Naive thymus-derived CD4-positive, alpha-beta T cell (primary cell): ENCODE measurements at regions of chr9 and their contacts with region 1.

Region 1: DNA sequence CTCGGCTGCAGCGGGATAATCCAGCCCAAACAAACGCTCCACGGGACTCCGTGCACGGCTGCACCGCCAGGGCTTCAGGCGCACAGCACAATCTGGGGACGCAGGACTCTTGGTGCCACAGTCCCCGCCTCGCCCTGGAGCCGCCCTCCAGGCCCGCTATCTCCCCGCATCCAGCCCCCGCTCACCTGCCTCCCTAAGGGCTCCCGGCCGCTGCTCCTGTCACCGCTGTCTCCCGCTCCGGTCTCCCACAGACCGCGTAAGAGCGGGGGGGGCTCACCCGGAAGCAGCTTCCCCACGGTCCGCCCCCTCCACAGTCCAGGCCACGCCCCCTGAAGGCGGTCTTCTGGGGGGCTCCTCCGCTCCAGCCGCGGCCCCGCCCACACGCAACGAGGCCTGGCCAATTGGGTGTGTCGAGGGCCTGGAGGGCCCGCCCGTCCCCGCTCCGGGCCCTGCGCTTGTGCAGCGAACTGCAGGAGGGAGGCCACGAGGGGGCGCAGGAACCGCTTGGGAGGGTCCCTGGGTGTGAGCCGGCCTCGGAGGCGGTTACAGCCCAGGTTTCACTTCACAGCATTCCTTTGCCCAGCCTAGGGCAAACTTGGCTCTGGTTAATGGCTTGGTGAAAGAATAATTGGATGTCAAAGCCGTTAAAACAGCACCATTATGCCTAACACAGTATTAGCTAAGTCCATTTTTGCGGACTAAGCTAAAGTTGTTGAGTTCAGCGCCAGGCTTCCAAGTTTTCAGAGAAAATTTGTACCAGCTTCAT is at the start of gene ALAD:
- DNase-seq: peak; percentile 99 to 100 (median 99)
- ATAC-seq: peak; percentile 99
- H3K4me3 ChIP-seq: peak within 1 kb of the TSS; percentile 82
- H3K4me3 Mint-ChIP-seq: peak within 1 kb of the TSS; percentile 89 to 96 (median 95)
- H3K27ac ChIP-seq: peak within 1 kb of the TSS; percentile 74
- H3K27ac Mint-ChIP-seq: peak within 1 kb of the TSS; percentile 81 to 91 (median 87)
- H3K4me1 ChIP-seq: peaks cover 12 to 13% of the 10 kb centered on the region in 2 donors
- H3K4me1 Mint-ChIP-seq: peaks cover 18 to 37% (median 25%) of the 10 kb centered on the region in 7 donors
- H3K27me3 ChIP-seq: no peaks in the 10 kb centered on the region
- H3K27me3 Mint-ChIP-seq: no peaks in the 10 kb centered on the region
- total RNA-seq, gene ALAD: 25.1 to 45.5 (median 39.1) TPM

Region 2: GRCh38 chr9:113221003-113221799 is 180.0 kb before region 1 on chr9 and contains the starts of genes FKBP15 and SLC31A1:
- CTCF ChIA-PET with region 1: no interaction called
- POLR2A ChIA-PET with region 1: interaction called, 3 read pairs
- intact Hi-C with region 1: loop called (anchors 1 to 2 kb)
- DNase-seq: peak; percentile 88 to 96 (median 96)
- ATAC-seq: peak; percentile 99
- H3K4me3 ChIP-seq: peak within 1 kb of the TSS; percentile 91
- H3K4me3 Mint-ChIP-seq: peak within 1 kb of the TSS; percentile 89 to 99 (median 94)
- H3K27ac ChIP-seq: peak within 1 kb of the TSS; percentile 94
- H3K27ac Mint-ChIP-seq: peak within 1 kb of the TSS; percentile 86 to 98 (median 94)
- H3K4me1 ChIP-seq: peaks cover 10 to 25% of the 10 kb centered on the region in 2 donors
- H3K4me1 Mint-ChIP-seq: peaks cover 15 to 58% (median 48%) of the 10 kb centered on the region in 7 donors
- H3K27me3 ChIP-seq: no peaks in the 10 kb centered on the region
- H3K27me3 Mint-ChIP-seq: no peaks in the 10 kb centered on the region
- total RNA-seq, gene FKBP15: 22.4 to 50.6 (median 33.4) TPM
- total RNA-seq, gene SLC31A1: 4.5 to 10.4 (median 4.7) TPM

Region 3: GRCh38 chr9:113340017-113340699 is 61.1 kb before region 1 on chr9 and contains the start of gene WDR31:
- CTCF ChIA-PET with region 1: no interaction called
- POLR2A ChIA-PET with region 1: interaction called, 7 read pairs
- intact Hi-C with region 1: loop called (anchors 1 kb)
- DNase-seq: peak; percentile 52 to 85 (median 75)
- ATAC-seq: peak; percentile 98
- H3K4me3 ChIP-seq: peak within 1 kb of the TSS; percentile 86
- H3K4me3 Mint-ChIP-seq: peak within 1 kb of the TSS; percentile 72 to 91 (median 88)
- H3K27ac ChIP-seq: peak within 1 kb of the TSS; percentile 62
- H3K27ac Mint-ChIP-seq: peak within 1 kb of the TSS; percentile 2 to 85 (median 62)
- H3K4me1 ChIP-seq: peaks cover 4 to 20% of the 10 kb centered on the region in 2 donors
- H3K4me1 Mint-ChIP-seq: peaks cover 12 to 54% (median 30%) of the 10 kb centered on the region in 7 donors
- H3K27me3 ChIP-seq: no peaks in the 10 kb centered on the region
- H3K27me3 Mint-ChIP-seq: peaks cover 0 to 7% (median 0%) of the 10 kb centered on the region in 5 donors
- total RNA-seq, gene WDR31: 0.27 to 1.7 (median 1.0) TPM

Region 4: DNA sequence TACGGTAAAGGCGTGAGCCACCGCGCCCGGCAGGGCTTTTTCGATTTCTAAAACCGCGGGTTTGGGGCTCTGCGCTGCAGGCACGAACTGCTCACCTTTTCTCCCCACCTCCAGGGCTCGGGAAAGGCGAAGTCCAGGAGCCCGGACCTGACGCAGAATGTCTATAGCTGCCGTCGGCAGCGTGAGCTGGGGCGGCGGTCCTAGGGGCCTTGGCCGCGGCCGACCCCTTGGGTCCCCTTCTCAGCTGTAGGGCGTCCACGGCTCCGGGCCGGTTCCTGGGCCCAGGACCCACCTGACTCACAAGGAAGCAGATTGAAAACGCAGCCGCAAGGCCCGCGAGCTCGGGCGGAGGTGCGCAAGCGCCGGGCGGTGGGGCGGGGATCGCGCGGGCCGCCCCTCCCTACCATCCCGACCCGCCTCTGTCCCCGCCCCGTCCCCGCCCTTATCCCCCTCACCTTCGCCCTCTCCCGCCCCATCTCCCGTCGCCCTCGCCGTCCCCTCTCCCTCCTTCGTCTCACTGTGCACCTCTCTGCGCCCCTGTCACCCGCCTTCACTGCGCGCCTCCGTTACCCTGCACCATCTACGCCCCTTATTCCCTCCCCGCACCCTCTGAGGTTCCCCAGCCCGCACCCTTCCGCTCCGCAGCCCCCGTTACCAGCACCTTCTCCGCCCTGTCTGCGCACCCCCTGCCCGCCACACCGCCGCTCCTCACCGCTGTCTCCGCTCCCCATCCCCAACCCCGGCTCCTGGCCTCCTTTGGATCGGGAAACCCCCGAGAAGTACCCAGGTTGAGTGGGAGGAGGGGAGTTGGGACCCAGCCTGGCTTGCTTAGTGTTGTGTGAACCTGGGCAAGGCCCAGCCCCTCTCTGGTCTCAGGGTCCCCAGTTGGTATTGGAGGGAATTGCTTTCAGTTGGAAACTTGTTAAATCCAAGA is 24.3 kb before region 1 on chr9 and contains the start of gene HDHD3:
- CTCF ChIA-PET with region 1: no interaction called
- POLR2A ChIA-PET with region 1: interaction called, 9 read pairs
- intact Hi-C with region 1: loop called (anchors 1 kb)
- DNase-seq: peak; percentile 70 to 84 (median 81)
- ATAC-seq: peak; percentile 96
- H3K4me3 ChIP-seq: peak within 1 kb of the TSS; percentile 81
- H3K4me3 Mint-ChIP-seq: peak within 1 kb of the TSS; percentile 82 to 98 (median 90)
- H3K27ac ChIP-seq: peak within 1 kb of the TSS; percentile 94
- H3K27ac Mint-ChIP-seq: peak within 1 kb of the TSS; percentile 68 to 97 (median 85)
- H3K4me1 ChIP-seq: peaks cover 0 to 7% of the 10 kb centered on the region in 2 donors
- H3K4me1 Mint-ChIP-seq: peaks cover 14 to 17% (median 16%) of the 10 kb centered on the region in 7 donors
- H3K27me3 ChIP-seq: no peaks in the 10 kb centered on the region
- H3K27me3 Mint-ChIP-seq: peaks cover 0 to 3% (median 0%) of the 10 kb centered on the region in 5 donors
- total RNA-seq, gene HDHD3: 11.3 to 32.2 (median 20.5) TPM

Region 5: GRCh38 chr9:113591001-113591898 is 190.0 kb after region 1 on chr9:
- CTCF ChIA-PET with region 1: interaction called, 18 read pairs
- POLR2A ChIA-PET with region 1: no interaction called
- intact Hi-C with region 1: loop called in 1 of 2 experiments (anchors 1 kb)
- DNase-seq: peak in 6 of 9 donors; percentile 30 to 75 (median 38)
- ATAC-seq: peak; percentile 58
- H3K4me3 ChIP-seq: no peak overlapping the region
- H3K4me3 Mint-ChIP-seq: no peak overlapping the region
- H3K27ac ChIP-seq: no peak overlapping the region
- H3K27ac Mint-ChIP-seq: peak overlapping the region in 1 of 9 donors; percentile 45
- H3K4me1 ChIP-seq: peaks cover 5 to 8% of the 10 kb centered on the region in 2 donors
- H3K4me1 Mint-ChIP-seq: peaks cover 20 to 47% (median 23%) of the 10 kb centered on the region in 7 donors
- H3K27me3 ChIP-seq: no peaks in the 10 kb centered on the region
- H3K27me3 Mint-ChIP-seq: no peaks in the 10 kb centered on the region

Region 6: GRCh38 chr9:113764582-113764981 is 363.4 kb after region 1 on chr9:
- CTCF ChIA-PET with region 1: no interaction called
- POLR2A ChIA-PET with region 1: no interaction called
- intact Hi-C with region 1: no loop called
- DNase-seq: no peak
- ATAC-seq: no peak
- H3K4me3 ChIP-seq: no peak overlapping the region
- H3K4me3 Mint-ChIP-seq: no peak overlapping the region
- H3K27ac ChIP-seq: no peak overlapping the region
- H3K27ac Mint-ChIP-seq: no peak overlapping the region
- H3K4me1 ChIP-seq: no peaks in the 10 kb centered on the region
- H3K4me1 Mint-ChIP-seq: no peaks in the 10 kb centered on the region
- H3K27me3 ChIP-seq: no peaks in the 10 kb centered on the region
- H3K27me3 Mint-ChIP-seq: peaks cover 14 to 41% (median 34%) of the 10 kb centered on the region in 5 donors